ENCODE measurements at regions of chr11 and their contacts with region 1.

Region 1: GRCh38 chr11:104609311-104610085 is 288.8 kb downstream of the CASP12 start:
- DNase-seq: peak; percentile 59
- H3K4me3 Mint-ChIP-seq: no peak overlapping the region
- H3K27ac Mint-ChIP-seq: no peak overlapping the region
- H3K4me1 Mint-ChIP-seq: no peaks in the 10 kb centered on the region
- H3K27me3 Mint-ChIP-seq: no peaks in the 10 kb centered on the region
- CTCF ChIP-seq: peak; percentile 72

Region 2: DNA sequence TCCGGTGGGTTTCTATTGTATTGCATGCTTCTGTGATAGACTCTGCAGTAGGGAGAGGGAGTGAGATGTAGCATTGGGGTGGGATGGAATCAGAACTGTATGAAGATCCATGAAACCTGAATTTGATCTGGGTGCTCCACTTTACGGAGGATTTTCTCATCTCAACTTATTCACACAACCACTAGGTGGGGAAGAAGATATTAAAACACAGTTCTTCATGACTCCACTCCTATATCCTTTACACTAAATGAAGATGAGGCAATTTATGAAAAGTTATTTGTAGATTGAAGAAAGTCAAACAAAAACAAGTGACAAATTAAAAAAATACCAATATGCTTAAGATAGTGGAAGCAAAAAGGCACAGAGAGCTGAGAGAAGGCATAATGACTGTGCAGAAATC is 353.0 kb before region 1 on chr11:
- CTCF ChIA-PET with region 1: no interaction called
- POLR2A ChIA-PET with region 1: no interaction called
- intact Hi-C with region 1: loop called (anchors 5 kb)
- DNase-seq: peak; percentile 17
- H3K4me3 Mint-ChIP-seq: no peak overlapping the region
- H3K27ac Mint-ChIP-seq: no peak overlapping the region
- H3K4me1 Mint-ChIP-seq: no peaks in the 10 kb centered on the region
- H3K27me3 Mint-ChIP-seq: no peaks in the 10 kb centered on the region
- CTCF ChIP-seq: no peak

Region 3: GRCh38 chr11:104946907-104947306 is 337.4 kb after region 1 on chr11:
- CTCF ChIA-PET with region 1: interaction called, 5 read pairs
- POLR2A ChIA-PET with region 1: no interaction called
- intact Hi-C with region 1: loop called (anchors 2 kb)
- DNase-seq: peak; percentile 80
- H3K4me3 Mint-ChIP-seq: no peak overlapping the region
- H3K27ac Mint-ChIP-seq: no peak overlapping the region
- H3K4me1 Mint-ChIP-seq: peaks cover 5% of the 10 kb centered on the region
- H3K27me3 Mint-ChIP-seq: no peaks in the 10 kb centered on the region
- CTCF ChIP-seq: peak; percentile 17

Region 4: DNA sequence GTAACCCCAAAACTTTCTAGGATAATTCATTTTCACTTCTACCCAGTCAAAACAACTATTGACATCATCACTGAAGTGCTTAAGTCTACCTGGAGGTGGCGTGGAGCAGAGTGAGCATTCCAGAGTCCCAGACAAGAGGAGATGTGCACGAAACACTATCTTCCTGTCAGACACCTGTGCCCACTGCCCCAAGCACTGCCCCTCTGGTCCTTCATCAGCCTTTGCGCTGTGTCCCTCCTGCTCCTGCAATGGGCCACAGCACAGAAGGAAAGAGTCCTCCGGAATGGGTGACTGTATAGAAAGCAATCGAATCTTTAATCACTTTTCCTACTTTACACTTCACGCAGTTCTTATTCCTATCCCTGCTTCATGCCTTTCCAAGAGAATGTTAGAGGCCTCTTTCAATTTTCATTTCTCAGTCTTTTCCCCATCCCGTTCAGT is 999.9 kb after region 1 on chr11:
- CTCF ChIA-PET with region 1: no interaction called
- POLR2A ChIA-PET with region 1: no interaction called
- intact Hi-C with region 1: loop called (anchors 2 kb)
- DNase-seq: peak; percentile 57
- H3K4me3 Mint-ChIP-seq: peak overlapping the region; percentile 70
- H3K27ac Mint-ChIP-seq: no peak overlapping the region
- H3K4me1 Mint-ChIP-seq: peaks cover 13% of the 10 kb centered on the region
- H3K27me3 Mint-ChIP-seq: peaks cover 15% of the 10 kb centered on the region
- CTCF ChIP-seq: peak; percentile 39

Measured in MCF 10A (cell line).